PC-9 (cell line): ENCODE measurements at regions of chr7 and their contacts with region 1.

Region 1: GRCh38 chr7:12322284-12322902 is 81.3 kb downstream of the VWDE start:
- DNase-seq: no peak
- H3K4me3 ChIP-seq: no peak overlapping the region
- H3K27ac ChIP-seq: no peak overlapping the region
- H3K4me1 ChIP-seq: no peaks in the 10 kb centered on the region
- H3K27me3 ChIP-seq: no peaks in the 10 kb centered on the region
- CTCF ChIP-seq: peak; percentile 88

Region 2: DNA sequence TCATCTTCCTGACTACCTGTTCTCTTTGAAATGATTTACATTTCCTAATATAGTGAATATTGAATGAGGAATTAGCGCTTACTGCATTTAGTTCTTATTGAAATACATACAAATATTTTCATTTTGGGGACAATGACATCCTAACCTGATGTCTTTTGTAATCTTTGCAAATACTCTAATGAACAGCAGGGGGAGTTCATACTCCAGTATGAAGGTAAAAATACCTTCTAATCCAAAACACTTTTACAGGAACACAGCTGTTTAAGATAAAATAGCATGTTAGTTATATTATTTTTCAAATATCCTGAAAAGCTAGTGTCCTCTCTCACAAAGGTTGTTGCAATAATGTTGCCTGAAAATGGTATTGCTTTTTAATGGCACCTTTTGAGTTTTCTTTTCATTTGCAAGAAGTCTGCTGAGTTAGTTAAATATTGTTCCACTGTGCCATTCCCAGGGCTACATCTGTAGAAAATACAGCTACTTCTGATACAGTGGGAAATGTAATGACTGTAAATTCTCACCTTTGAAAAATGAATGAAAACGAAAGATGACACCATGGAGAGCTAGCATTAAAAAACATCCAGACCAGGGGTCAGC is 948.7 kb before region 1 on chr7:
- CTCF ChIA-PET with region 1: no interaction called
- POLR2A ChIA-PET with region 1: no interaction called
- intact Hi-C with region 1: loop called (anchors 1 kb)
- DNase-seq: no peak
- H3K4me3 ChIP-seq: no peak overlapping the region
- H3K27ac ChIP-seq: no peak overlapping the region
- H3K4me1 ChIP-seq: no peaks in the 10 kb centered on the region
- H3K27me3 ChIP-seq: no peaks in the 10 kb centered on the region
- CTCF ChIP-seq: peak; percentile 77

Region 3: GRCh38 chr7:11427686-11428273 is 894.6 kb before region 1 on chr7:
- CTCF ChIA-PET with region 1: interaction called, 3 read pairs
- POLR2A ChIA-PET with region 1: no interaction called
- intact Hi-C with region 1: loop called (anchors 1 kb)
- DNase-seq: peak in 1 of 2 experiments; percentile 54
- H3K4me3 ChIP-seq: no peak overlapping the region
- H3K27ac ChIP-seq: no peak overlapping the region
- H3K4me1 ChIP-seq: no peaks in the 10 kb centered on the region
- H3K27me3 ChIP-seq: no peaks in the 10 kb centered on the region
- CTCF ChIP-seq: peak; percentile 90

Region 4: GRCh38 chr7:12067141-12067831 is 255.1 kb before region 1 on chr7:
- CTCF ChIA-PET with region 1: no interaction called
- POLR2A ChIA-PET with region 1: no interaction called
- intact Hi-C with region 1: loop called (anchors 1 kb)
- DNase-seq: peak in 1 of 2 experiments; percentile 72
- H3K4me3 ChIP-seq: no peak overlapping the region
- H3K27ac ChIP-seq: peak overlapping the region; percentile 99
- H3K4me1 ChIP-seq: peaks cover 23% of the 10 kb centered on the region
- H3K27me3 ChIP-seq: no peaks in the 10 kb centered on the region
- CTCF ChIP-seq: peak; percentile 61

Region 5: GRCh38 chr7:12233175-12233574 is 89.2 kb before region 1 on chr7:
- CTCF ChIA-PET with region 1: no interaction called
- POLR2A ChIA-PET with region 1: no interaction called
- intact Hi-C with region 1: no loop called
- DNase-seq: no peak
- H3K4me3 ChIP-seq: no peak overlapping the region
- H3K27ac ChIP-seq: no peak overlapping the region
- H3K4me1 ChIP-seq: no peaks in the 10 kb centered on the region
- H3K27me3 ChIP-seq: no peaks in the 10 kb centered on the region
- CTCF ChIP-seq: no peak

Region 6: DNA sequence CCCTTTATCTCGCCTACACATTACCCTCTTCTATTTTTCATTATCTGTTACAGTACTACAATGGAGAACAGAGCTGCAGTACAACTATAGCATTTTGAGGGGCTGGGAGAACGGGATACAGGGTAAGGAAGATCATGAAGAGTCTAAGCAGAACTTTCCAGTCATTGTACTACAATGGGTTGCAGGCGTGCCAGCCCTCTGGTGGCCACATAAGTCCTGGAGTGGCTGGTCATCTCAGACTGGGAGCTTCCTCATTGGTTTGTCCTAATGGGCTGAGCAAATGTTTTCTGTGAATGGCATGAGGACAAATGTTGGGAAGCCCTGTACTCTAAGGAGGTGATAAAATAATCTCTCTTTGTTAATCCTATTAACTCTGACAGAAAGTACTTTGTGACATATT is 78.3 kb before region 1 on chr7:
- CTCF ChIA-PET with region 1: no interaction called
- POLR2A ChIA-PET with region 1: no interaction called
- intact Hi-C with region 1: loop called (anchors 5 kb)
- DNase-seq: peak in 1 of 2 experiments; percentile 16
- H3K4me3 ChIP-seq: no peak overlapping the region
- H3K27ac ChIP-seq: no peak overlapping the region
- H3K4me1 ChIP-seq: no peaks in the 10 kb centered on the region
- H3K27me3 ChIP-seq: no peaks in the 10 kb centered on the region
- CTCF ChIP-seq: peak; percentile 55